AG04449 (cell line): ENCODE measurements at regions of chr6 and their contacts with region 1.

Region 1: GRCh38 chr6:13696226-13696625 is 15.4 kb downstream of the RANBP9 start:
- DNase-seq: peak; percentile 65
- H3K4me3 ChIP-seq: no peak overlapping the region
- CTCF ChIP-seq: no peak

Region 2: DNA sequence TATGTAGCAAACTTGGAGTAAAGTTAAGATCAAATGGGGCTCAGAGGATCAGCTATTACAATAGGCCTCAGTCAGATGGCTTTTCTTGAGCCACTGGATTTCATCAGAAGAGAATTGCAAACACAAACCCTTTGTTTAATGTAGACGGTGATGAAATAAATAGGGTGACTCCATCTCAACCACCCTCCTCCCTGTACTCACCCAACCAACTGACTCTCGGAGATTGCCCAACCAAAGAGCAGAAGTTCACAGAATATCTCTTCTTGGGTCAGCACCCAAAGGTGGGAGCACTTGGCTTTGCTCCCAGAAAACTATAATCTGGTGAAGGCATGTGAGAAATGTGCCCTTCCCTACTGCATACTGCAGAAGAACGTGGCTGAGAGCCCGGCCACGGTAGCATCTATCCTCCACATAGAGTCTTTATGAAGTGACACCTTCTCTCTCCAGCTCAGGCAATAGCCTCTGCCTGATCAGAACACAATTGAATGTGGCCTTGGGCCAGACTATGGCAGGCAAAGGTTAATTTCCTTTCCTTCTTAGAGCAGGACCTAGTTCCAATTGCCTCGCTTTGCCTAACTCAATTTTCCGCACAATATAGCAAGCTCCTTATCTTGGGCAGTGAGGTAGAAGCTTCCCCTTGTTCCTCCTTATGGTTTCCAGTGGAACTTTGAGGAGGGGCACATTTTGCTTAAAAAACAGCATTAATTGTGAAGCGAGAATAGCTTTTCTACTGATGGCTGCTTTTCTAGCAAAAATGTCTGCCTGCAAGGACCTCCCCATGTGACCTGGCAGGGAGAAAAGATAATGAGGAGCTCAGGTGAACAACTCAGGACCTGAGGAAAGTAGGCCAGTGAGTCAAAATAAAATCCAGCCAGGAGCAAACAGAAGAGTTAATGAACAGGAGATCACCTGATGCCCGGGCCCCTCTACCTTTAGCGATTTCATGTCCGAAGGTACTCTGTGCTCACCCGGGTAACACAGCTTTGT is 288.2 kb before region 1 on chr6:
- CTCF ChIA-PET with region 1: no interaction called
- POLR2A ChIA-PET with region 1: no interaction called
- DNase-seq: peak; percentile 41
- H3K4me3 ChIP-seq: no peak overlapping the region
- CTCF ChIP-seq: no peak

Region 3: DNA sequence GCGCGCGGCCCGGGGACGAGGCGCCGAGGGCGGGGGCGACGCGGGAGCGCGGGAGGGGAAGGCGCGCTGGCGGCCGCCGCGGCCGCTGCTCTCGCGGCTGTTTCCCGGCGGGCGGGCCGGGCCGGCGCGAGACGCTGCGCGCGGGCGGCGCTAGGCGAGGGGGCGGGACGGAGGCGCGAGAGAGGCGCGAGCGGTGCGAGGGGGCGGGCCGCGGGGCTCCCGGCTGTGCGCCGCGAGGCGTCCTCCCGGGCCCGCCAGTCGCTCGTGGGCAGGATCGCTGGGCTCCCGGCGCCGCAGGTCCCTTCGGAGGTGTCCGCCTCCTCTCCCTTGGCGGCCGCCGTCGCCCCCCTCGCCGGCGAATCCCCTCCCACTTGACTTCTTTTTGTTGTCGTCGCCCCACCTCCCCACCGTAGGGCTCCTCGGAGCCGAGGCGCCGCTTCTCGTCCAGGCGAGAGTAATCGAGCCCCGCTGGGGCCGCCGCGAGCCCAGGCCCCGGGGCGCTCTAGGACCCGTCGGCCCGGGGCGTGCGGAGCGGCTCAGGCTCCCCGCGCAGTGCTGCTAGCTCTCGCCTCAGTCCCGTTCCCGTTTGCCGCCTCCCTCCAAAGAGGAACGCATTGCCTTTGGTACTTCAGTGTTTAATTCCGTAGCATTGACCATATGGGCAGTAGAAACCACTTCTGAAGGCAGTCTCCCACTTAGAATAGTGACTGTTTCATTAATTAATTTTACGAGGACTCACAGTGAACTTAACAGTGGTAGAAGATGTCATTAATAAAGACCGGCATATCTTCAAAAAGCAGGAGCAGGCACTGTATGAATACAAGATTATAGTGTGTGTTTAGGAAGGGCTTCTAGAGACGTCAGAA is 15.7 kb after region 1 on chr6 and contains the start of gene RANBP9:
- CTCF ChIA-PET with region 1: interaction called, 16 read pairs
- POLR2A ChIA-PET with region 1: interaction called, 3 read pairs
- DNase-seq: peak; percentile 37
- H3K4me3 ChIP-seq: peak within 1 kb of the TSS; percentile 78
- CTCF ChIP-seq: no peak